Mammary epithelial cell (primary cell): ENCODE measurements at regions of chr1 and their contacts with region 1.

Region 1: DNA sequence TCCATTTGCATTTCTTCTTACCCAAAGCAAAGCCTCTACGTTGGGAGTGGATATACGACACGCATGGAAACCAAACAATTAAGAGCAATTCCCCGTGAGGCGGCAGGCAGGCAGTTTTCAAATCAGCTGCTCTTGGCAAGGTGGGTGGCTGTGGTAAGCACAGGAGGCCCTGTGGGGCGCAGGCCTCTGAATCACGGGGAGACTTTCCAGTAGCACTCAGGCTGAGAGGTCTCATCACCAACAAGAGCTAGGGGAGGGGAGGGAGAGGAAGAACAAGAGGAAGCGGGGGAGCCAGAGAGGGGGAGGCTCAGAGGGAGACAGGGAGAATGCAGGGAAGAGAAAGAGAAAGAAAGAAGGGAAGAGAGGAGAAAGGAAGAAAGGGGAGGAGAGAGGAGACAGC is 56.4 kb downstream of the MT1HL1 start:
- DNase-seq: no peak
- H3K4me3 ChIP-seq: no peak overlapping the region
- H3K27ac ChIP-seq: no peak overlapping the region
- H3K4me1 ChIP-seq: no peaks in the 10 kb centered on the region
- H3K27me3 ChIP-seq: no peaks in the 10 kb centered on the region
- CTCF ChIP-seq: no peak

Region 2: GRCh38 chr1:236888903-236889302 is 58.9 kb before region 1 on chr1:
- CTCF ChIA-PET with region 1: no interaction called
- dilution Hi-C with region 1: loop called (anchors 5 kb)
- in situ Hi-C with region 1: no loop called
- intact Hi-C with region 1: no loop called
- DNase-seq: no peak
- H3K4me3 ChIP-seq: no peak overlapping the region
- H3K27ac ChIP-seq: no peak overlapping the region
- H3K4me1 ChIP-seq: no peaks in the 10 kb centered on the region
- H3K27me3 ChIP-seq: no peaks in the 10 kb centered on the region
- CTCF ChIP-seq: no peak

Region 3: DNA sequence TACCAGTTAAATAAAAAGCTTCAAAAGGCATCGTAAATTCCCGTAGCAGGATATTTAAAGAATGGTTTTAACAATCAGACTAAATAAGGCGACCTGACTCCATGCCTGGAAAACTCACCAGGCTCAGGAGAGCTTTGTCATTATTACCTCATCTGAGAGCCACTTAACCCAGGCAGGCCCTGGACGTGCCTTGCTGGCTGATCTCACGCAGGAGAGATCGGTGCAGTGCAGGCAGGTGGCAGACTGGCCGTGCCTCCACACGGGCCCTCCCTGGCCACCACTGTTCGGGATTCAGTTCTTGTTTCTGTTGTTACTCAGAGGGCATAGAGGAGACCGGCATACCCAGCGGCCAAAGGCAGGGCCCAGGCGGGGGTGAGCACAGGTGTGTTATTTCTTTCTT is 50.1 kb after region 1 on chr1:
- CTCF ChIA-PET with region 1: no interaction called
- dilution Hi-C with region 1: loop called (anchors 10 kb)
- in situ Hi-C with region 1: no loop called
- intact Hi-C with region 1: no loop called
- DNase-seq: no peak
- H3K4me3 ChIP-seq: no peak overlapping the region
- H3K27ac ChIP-seq: no peak overlapping the region
- H3K4me1 ChIP-seq: no peaks in the 10 kb centered on the region
- H3K27me3 ChIP-seq: no peaks in the 10 kb centered on the region
- CTCF ChIP-seq: no peak

Region 4: DNA sequence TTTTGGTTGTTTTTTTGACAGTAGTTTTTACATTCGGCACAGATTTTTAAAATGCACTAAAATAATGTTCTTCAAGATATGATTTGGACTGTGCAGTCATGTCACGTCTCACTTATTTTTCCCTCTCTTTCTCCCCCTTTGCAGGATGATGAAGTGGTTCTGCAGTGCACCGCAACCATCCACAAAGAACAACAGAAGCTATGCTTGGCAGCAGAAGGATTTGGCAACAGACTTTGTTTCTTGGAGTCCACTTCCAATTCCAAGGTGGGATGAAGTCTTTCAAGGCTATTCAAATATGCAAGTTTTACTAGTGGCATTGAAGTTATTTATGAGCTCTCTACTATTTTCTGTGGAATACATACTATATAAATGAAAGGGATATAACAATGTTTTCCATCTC is 322.6 kb after region 1 on chr1:
- CTCF ChIA-PET with region 1: no interaction called
- dilution Hi-C with region 1: no loop called
- in situ Hi-C with region 1: no loop called
- intact Hi-C with region 1: no loop called
- DNase-seq: no peak
- H3K4me3 ChIP-seq: no peak overlapping the region
- H3K27ac ChIP-seq: no peak overlapping the region
- H3K4me1 ChIP-seq: no peaks in the 10 kb centered on the region
- H3K27me3 ChIP-seq: no peaks in the 10 kb centered on the region
- CTCF ChIP-seq: no peak

Region 5: GRCh38 chr1:237327061-237327460 is 379.3 kb after region 1 on chr1:
- CTCF ChIA-PET with region 1: no interaction called
- dilution Hi-C with region 1: no loop called
- in situ Hi-C with region 1: no loop called
- intact Hi-C with region 1: no loop called
- DNase-seq: no peak
- H3K4me3 ChIP-seq: no peak overlapping the region
- H3K27ac ChIP-seq: no peak overlapping the region
- H3K4me1 ChIP-seq: no peaks in the 10 kb centered on the region
- H3K27me3 ChIP-seq: no peaks in the 10 kb centered on the region
- CTCF ChIP-seq: no peak